ENCODE measurements at regions of chr19 and their contacts with region 1.

Region 1: DNA sequence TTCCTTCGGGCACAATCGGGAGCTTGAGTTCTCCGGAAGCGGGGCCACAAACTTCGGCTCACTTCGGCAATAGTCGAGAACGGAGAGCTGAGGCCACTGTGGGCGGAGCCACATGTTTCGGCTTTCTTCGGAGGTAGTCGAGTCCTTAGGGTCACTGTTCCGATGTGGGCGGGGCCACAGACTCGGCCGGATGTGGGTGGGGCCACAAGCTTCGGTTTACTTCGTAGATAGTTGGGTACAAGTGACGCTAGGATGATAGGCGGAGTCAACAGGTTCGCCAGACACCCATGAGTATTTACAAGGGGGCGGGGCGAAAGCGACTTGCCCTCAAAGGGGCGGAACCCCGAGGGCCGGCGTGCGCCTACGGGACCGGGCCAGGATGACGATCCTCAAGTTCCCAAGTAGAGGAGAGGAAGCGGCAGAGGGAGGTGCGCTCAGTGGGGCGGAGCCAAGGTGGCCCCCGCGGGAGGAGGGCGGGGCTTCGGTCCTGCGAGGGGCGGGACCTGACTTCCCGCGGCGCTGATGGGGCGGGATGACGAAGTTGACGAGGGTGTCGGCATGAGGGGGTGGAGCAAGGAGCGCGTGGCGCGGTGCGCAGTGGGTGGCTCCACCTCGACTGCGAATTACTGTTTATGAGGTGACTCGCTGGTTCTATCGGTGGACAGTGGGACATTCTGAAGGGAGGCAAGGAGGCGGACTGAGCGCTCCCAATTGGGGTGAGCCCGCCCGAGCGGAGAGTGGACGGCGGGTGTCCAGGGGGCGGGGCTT is 539 bp upstream of the MBOAT7 start:
- DNase-seq: peak; percentile 100
- H3K4me3 ChIP-seq: peak overlapping the region; percentile 77
- H3K27ac ChIP-seq: peak overlapping the region; percentile 93
- H3K4me1 ChIP-seq: peaks cover 24% of the 10 kb centered on the region
- H3K27me3 ChIP-seq: no peaks in the 10 kb centered on the region
- CTCF ChIP-seq: no peak

Region 2: DNA sequence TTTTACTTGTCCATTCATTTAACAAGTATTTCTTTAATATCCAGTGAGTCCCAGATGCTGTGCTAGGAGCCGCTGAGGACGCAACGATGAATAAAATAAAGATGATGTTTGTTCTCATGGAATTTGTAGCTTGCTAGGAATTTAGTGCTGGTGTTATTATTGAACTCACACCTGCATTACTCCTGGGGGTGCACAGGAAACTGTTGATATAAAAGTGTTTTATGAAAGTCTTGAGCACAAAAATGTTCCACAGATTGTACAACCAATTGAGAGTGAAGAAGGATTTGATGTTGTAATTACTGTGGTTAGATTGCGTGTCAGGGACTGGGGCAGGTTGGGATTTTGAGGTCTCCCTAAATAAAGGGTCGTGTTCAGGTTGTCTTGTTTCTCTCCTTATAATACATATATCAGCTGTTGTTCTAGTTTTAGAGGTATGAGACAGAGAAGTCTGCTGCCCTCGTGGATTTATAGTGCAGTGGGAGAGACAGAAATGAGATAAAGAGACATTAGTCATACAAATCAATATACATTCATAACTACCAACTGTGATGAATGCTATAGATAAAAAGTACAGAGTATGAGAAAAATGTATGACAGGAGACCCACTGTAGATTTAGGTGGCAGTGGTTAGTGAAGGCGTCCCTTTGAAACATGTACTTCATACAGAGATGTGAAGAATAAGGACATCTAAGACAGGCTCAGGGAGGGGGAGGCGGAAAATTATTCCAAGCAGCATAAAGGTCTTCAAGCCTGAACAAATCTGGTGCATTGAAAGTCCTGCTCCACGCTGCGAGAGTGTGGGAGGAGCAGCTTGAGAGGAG is 187.2 kb before region 1 on chr19:
- CTCF ChIA-PET with region 1: no interaction called
- POLR2A ChIA-PET with region 1: no interaction called
- intact Hi-C with region 1: no loop called
- DNase-seq: peak in 1 of 2 experiments; percentile 93
- H3K4me3 ChIP-seq: peak overlapping the region; percentile 34; the same call in 1 of the 2 replicates
- H3K27ac ChIP-seq: peak overlapping the region; percentile 78
- H3K4me1 ChIP-seq: peaks cover 55% of the 10 kb centered on the region
- H3K27me3 ChIP-seq: no peaks in the 10 kb centered on the region
- CTCF ChIP-seq: no peak

Region 3: DNA sequence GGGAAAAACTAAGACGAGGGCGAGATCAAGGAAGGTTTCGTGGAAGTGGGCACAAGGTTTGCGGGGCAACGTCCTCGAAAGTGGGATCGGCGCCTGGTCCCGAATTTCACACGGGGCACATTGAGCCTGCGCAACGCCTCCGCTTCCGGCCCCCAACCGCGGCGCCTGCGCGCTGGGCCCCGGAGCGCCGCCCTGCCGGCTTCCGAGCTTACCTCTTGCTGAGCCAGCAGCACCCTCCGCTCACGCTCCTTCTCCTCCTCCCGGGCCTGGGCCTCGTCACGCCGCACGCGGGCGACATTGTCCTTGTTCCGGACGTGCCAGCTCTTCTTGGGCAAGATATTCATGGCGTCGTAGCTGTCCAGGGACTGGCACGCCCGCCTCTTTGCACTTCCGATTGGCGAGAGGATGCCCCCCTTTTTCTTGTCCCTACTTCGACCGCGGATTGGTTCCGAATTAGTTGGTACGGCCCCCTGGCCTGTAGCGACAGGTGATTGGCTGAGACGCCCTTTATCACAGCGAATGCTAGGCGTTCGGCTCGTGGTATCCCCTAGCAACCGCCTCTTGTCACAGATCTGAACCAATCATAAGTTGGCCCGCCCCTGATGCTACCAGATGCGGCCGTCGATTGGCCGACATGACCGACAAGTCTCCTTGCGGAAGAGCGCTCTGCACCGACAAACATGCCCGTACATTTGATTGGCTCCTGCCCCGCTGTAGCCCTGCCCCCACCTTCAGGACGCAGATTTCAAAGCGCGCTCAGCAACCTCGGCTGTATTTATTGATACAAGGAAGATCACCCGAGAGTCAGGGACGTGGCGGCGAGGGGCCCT is 30.4 kb before region 1 on chr19 and contains the start of gene LENG1:
- CTCF ChIA-PET with region 1: no interaction called
- POLR2A ChIA-PET with region 1: interaction called, 13 read pairs
- intact Hi-C with region 1: loop called (anchors 1 kb)
- DNase-seq: peak; percentile 100
- H3K4me3 ChIP-seq: peak within 1 kb of the TSS; percentile 82
- H3K27ac ChIP-seq: peak within 1 kb of the TSS; percentile 57
- H3K4me1 ChIP-seq: peaks cover 33% of the 10 kb centered on the region
- H3K27me3 ChIP-seq: no peaks in the 10 kb centered on the region
- CTCF ChIP-seq: peak; percentile 53; the same call in 1 of the 2 replicates
- total RNA-seq, gene LENG1: 5.0 and 6.7 TPM in 2 replicates

Region 4: DNA sequence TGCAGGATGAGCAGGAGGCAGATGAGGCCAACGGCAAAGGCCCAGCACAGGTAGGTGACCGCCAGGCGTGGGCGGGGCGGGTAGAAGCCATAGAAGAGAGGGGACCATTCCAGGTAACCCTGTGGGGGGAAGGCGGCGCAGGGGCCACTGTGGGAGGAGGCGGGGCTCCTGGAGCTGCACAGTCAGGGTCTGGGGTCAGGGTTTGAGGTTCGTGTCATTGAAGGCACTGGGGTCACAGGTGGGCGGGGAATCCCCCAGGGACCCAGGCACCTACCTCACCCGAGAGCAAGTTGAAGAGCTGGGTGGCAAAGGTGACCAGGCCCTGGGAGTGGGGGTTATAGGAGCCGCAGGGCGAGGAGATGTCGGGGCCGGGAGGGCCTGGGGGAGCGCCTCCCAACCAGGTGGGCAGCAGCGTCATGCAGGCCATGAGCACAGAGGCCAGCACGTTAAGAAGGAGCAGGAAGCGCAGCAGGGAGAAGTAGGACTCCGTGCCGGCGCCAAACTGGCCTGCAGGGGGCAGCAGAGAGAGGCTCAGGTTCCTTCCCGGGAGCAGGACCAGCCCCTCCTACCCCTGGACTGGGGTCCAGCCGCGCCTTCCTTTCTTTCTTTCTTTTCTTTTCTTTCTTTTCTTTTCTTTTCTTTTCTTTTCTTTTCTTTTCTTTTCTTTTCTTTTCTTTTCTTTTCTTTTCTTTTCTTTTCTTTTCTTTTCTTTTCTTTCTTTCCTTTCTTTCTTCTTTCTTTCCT is 21.6 kb before region 1 on chr19:
- CTCF ChIA-PET with region 1: interaction called, 4 read pairs
- POLR2A ChIA-PET with region 1: interaction called, 50 read pairs
- intact Hi-C with region 1: loop called (anchors 1 kb)
- DNase-seq: peak; percentile 69 to 91
- H3K4me3 ChIP-seq: no peak overlapping the region
- H3K27ac ChIP-seq: no peak overlapping the region
- H3K4me1 ChIP-seq: peaks cover 9% of the 10 kb centered on the region; the same call in 1 of the 2 replicates
- H3K27me3 ChIP-seq: no peaks in the 10 kb centered on the region
- CTCF ChIP-seq: peak; percentile 83

Region 5: GRCh38 chr19:54203151-54203611 is 13.3 kb after region 1 on chr19:
- CTCF ChIA-PET with region 1: no interaction called
- POLR2A ChIA-PET with region 1: interaction called, 14 read pairs
- intact Hi-C with region 1: loop called (anchors 1 kb)
- DNase-seq: no peak
- H3K4me3 ChIP-seq: peak overlapping the region; percentile 82; the same call in 1 of the 2 replicates
- H3K27ac ChIP-seq: peak overlapping the region; percentile 85; the same call in 1 of the 2 replicates
- H3K4me1 ChIP-seq: peaks cover 47% of the 10 kb centered on the region
- H3K27me3 ChIP-seq: no peaks in the 10 kb centered on the region
- CTCF ChIP-seq: no peak

Region 6: GRCh38 chr19:54229146-54229545 is 39.2 kb after region 1 on chr19:
- CTCF ChIA-PET with region 1: no interaction called
- POLR2A ChIA-PET with region 1: no interaction called
- intact Hi-C with region 1: no loop called
- DNase-seq: no peak
- H3K4me3 ChIP-seq: no peak overlapping the region
- H3K27ac ChIP-seq: no peak overlapping the region
- H3K4me1 ChIP-seq: no peaks in the 10 kb centered on the region
- H3K27me3 ChIP-seq: peaks cover 44% of the 10 kb centered on the region
- CTCF ChIP-seq: no peak

Region 7: DNA sequence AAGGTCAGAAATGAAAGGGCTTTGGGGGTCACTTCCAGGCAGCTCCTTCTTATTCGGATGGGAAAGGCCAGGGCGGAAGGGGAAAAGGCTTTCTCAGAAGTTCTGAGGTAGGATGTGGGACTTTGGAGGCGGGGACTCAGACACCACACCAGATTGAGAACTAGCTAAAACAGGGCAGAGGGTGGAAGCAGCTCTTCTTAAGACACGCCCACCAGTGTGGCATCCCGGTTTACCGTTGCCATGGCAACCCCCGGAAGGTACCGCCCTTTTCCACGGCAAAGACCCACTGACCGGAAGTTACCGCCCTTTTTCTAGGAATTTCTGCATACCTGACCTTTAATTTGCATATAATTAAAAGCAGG is 126.8 kb after region 1 on chr19:
- CTCF ChIA-PET with region 1: no interaction called
- POLR2A ChIA-PET with region 1: no interaction called
- intact Hi-C with region 1: no loop called
- DNase-seq: no peak
- H3K4me3 ChIP-seq: no peak overlapping the region
- H3K27ac ChIP-seq: no peak overlapping the region
- H3K4me1 ChIP-seq: no peaks in the 10 kb centered on the region
- H3K27me3 ChIP-seq: peaks cover 97% of the 10 kb centered on the region
- CTCF ChIP-seq: no peak

Region 8: GRCh38 chr19:55075687-55076003 is 885.7 kb after region 1 on chr19 and contains the start of gene EPS8L1:
- CTCF ChIA-PET with region 1: no interaction called
- POLR2A ChIA-PET with region 1: interaction called, 10 read pairs
- intact Hi-C with region 1: no loop called
- DNase-seq: peak; percentile 92 to 97
- H3K4me3 ChIP-seq: peak within 1 kb of the TSS; percentile 60
- H3K27ac ChIP-seq: peak within 1 kb of the TSS; percentile 79
- H3K4me1 ChIP-seq: peaks cover 31% of the 10 kb centered on the region
- H3K27me3 ChIP-seq: no peaks in the 10 kb centered on the region
- CTCF ChIP-seq: no peak
- total RNA-seq, gene EPS8L1: 111 and 162 TPM in 2 replicates

Measured in PC-9 (cell line).